ENCODE measurements at regions of chr3 and their contacts with region 1.

Region 1: DNA sequence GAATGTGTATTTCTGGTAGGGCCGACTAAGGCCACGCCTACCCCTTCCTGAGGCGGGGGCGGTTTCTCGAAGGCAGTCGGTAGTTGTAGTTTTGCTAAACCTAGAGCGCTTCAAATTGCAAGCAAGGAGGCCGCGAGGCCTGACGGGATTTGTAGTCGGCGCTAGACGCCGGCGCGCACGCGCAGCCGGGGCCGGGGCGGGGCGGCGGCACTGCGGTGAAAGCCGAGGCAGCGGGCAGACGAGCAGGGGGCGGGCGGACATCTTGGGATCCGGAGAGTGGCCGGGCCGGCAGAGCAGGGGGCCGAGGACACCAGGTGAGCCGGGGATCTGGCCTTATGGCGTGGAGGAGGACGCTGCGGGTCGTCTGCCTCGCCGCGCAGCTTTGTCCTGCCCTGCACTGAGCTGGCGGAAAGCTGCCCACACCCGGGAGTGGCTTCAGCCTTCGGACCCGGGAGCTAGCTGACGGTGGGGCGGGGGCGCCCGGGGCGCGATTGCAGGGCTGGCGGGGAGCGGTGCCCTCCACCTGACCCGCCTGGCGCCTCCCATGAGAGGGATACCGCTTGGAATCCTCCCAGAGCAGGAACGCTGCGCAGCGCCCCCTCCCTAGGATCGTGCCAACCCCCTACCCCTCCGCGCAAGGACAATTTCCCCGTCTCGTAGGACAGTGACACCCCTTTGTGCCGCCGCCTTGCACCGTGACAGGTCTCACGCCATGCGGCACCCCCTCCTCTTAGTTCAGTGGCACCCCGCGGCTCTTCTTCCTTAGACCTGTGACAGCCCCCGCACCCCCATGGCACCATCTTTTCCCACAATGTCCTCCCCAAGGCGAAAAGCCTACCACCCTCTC is at the start of gene AP2M1:
- DNase-seq: peak; percentile 98
- H3K4me3 Mint-ChIP-seq: peak within 1 kb of the TSS; percentile 97
- H3K27ac Mint-ChIP-seq: peak within 1 kb of the TSS; percentile 82
- H3K4me1 Mint-ChIP-seq: peaks cover 17% of the 10 kb centered on the region
- H3K27me3 Mint-ChIP-seq: no peaks in the 10 kb centered on the region
- total RNA-seq, gene AP2M1: 234 and 240 TPM in 2 replicates

Region 2: GRCh38 chr3:184017672-184018423 is 157.0 kb before region 1 on chr3 and contains the start of gene ABCC5:
- intact Hi-C with region 1: loop called (anchors 1 kb)
- DNase-seq: peak; percentile 78
- H3K4me3 Mint-ChIP-seq: peak within 1 kb of the TSS; percentile 97
- H3K27ac Mint-ChIP-seq: peak within 1 kb of the TSS; percentile 86
- H3K4me1 Mint-ChIP-seq: peaks cover 23% of the 10 kb centered on the region
- H3K27me3 Mint-ChIP-seq: peaks cover 10% of the 10 kb centered on the region
- total RNA-seq, gene ABCC5: 20.6 and 21.0 TPM in 2 replicates

Region 3: DNA sequence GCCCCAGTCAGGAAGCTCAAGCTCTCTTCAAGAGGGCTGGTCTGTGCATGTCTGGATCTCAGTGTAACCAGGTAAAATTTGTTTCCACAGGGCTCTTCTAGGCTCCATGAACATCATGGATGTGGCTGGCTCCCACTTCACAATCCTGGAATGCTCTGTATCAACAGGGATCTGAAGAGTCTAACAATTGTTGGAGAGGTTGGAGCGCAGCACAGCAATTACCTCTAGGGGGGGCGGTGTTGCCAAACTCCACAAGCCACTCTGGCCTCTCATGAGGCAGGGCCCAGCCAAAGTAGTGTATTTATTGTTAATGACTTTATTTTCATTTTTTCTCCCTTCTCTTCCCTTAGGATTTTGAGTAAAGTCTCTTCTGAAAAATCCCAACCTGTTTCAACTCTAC is 45.9 kb before region 1 on chr3:
- intact Hi-C with region 1: no loop called
- DNase-seq: no peak
- H3K4me3 Mint-ChIP-seq: no peak overlapping the region
- H3K27ac Mint-ChIP-seq: no peak overlapping the region
- H3K4me1 Mint-ChIP-seq: peaks cover 4% of the 10 kb centered on the region
- H3K27me3 Mint-ChIP-seq: peaks cover 4% of the 10 kb centered on the region

Region 4: GRCh38 chr3:184154885-184155643 is 19.8 kb before region 1 on chr3 and contains the start of gene DVL3:
- intact Hi-C with region 1: loop called (anchors 1 kb)
- DNase-seq: peak; percentile 49
- H3K4me3 Mint-ChIP-seq: peak within 1 kb of the TSS; percentile 96
- H3K27ac Mint-ChIP-seq: peak within 1 kb of the TSS; percentile 79
- H3K4me1 Mint-ChIP-seq: peaks cover 16% of the 10 kb centered on the region
- H3K27me3 Mint-ChIP-seq: no peaks in the 10 kb centered on the region
- total RNA-seq, gene DVL3: 53.8 and 56.1 TPM in 2 replicates

Region 5: DNA sequence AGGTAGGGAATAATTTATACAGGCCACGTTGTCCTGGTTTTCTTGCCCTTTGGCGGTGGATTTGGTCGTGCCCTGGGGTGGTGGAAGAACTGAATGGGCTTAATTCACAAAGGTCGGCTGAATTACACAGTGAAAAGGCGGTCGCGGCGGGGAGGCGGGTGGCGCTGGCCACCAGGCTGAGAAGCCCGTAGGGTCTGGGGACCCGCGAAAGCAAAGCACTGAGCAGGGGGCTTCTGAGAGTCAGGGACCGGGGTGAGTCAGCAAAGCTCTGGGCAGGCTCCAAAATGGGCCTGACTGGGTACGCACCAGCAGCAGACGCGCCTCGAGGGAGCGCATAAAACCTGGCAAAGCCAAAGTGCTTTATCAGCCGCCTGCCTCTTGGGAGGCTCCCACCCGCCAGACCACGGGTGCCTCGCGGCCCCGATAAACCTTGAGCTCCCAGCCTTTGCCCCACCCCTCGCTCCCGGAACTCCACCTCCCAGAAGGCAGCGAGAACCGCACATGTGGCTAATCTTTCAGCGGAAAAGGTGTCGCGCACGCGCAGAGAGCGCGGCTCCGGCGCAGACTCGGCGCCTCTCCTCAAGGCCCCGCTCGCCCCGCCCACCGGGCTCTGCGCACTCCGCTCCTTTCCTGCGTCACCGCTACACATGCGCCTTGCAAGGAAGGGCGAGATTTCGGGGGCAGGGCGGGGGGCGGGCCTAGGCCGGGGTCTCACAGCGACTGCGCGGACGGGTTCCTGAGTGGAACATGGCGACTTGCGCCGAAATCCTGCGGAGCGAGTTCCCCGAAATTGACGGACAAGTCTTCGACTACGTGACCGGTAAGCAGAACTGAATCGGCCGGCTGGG is 10.8 kb after region 1 on chr3 and contains the start of gene ABCF3:
- intact Hi-C with region 1: loop called (anchors 1 kb)
- DNase-seq: peak; percentile 99
- H3K4me3 Mint-ChIP-seq: peak within 1 kb of the TSS; percentile 94
- H3K27ac Mint-ChIP-seq: peak within 1 kb of the TSS; percentile 93
- H3K4me1 Mint-ChIP-seq: peaks cover 18% of the 10 kb centered on the region
- H3K27me3 Mint-ChIP-seq: no peaks in the 10 kb centered on the region
- total RNA-seq, gene ABCF3: 68.2 and 73.4 TPM in 2 replicates